Common myeloid progenitor, CD34-positive (primary cell): ENCODE measurements at regions of chr13 and their contacts with region 1.

Region 1: DNA sequence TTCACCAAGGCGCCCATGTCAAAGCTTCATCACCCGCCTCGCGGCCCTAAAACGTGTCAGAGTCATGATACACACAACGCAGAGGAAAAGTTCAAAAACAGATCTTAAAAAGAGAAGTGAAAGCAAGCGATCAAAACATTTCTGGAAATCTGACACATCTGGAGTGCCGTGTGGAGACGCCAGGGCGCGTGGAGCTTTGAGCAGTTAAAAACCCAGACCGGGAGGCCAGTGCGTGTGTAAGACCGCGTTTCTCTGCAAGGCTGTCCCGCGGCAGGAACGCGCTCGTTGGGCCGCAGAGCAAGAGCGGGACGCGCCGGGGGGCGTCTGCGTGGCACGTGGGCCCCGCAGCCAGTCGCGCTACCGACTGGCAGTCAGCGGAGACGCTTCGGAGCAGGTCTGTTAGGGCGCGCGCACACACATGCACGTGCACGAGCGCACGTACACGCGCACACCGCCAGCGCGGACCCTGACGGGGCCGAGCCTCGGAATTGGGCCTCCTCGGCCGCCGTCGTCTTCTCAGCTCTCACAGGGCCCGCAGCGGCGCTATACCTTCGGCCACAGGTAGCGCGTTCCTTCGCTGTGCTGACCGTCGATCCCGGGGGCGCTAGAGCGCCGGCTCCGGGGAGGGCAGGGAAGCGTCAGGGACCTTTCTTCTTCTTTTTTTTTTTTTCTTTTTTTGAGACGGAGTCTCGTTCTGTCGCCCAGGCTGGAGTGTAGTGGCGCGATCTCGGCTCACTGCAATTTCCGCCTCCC is 35.8 kb downstream of the RNF6 start:
- DNase-seq: peak; percentile 96 to 98 (median 98)
- H3K4me3 ChIP-seq: peak overlapping the region; percentile 67 to 89 (median 71)
- H3K27ac ChIP-seq: peak overlapping the region; percentile 17 to 71
- H3K4me1 ChIP-seq: peaks cover 0 to 14% (median 9%) of the 10 kb centered on the region in 4 experiments
- H3K27me3 ChIP-seq: no peaks in the 10 kb centered on the region

Region 2: GRCh38 chr13:26168237-26168820 is 18.0 kb before region 1 on chr13:
- CTCF ChIA-PET with region 1: interaction called, 13 read pairs
- POLR2A ChIA-PET with region 1: no interaction called
- DNase-seq: peak; percentile 31 to 79 (median 72)
- H3K4me3 ChIP-seq: peak overlapping the region in 1 of 7 experiments; percentile 17
- H3K27ac ChIP-seq: peak overlapping the region in 1 of 2 experiments; percentile 20
- H3K4me1 ChIP-seq: peaks cover 0 to 15% (median 6%) of the 10 kb centered on the region in 4 experiments
- H3K27me3 ChIP-seq: no peaks in the 10 kb centered on the region

Region 3: GRCh38 chr13:26482451-26483197 is 296.3 kb after region 1 on chr13:
- CTCF ChIA-PET with region 1: interaction called, 13 read pairs
- POLR2A ChIA-PET with region 1: no interaction called
- DNase-seq: peak; percentile 86 to 93 (median 91)
- H3K4me3 ChIP-seq: peak overlapping the region in 4 of 7 experiments; percentile 50 to 71 (median 58)
- H3K27ac ChIP-seq: no peak overlapping the region
- H3K4me1 ChIP-seq: no peaks in the 10 kb centered on the region
- H3K27me3 ChIP-seq: no peaks in the 10 kb centered on the region

Region 4: DNA sequence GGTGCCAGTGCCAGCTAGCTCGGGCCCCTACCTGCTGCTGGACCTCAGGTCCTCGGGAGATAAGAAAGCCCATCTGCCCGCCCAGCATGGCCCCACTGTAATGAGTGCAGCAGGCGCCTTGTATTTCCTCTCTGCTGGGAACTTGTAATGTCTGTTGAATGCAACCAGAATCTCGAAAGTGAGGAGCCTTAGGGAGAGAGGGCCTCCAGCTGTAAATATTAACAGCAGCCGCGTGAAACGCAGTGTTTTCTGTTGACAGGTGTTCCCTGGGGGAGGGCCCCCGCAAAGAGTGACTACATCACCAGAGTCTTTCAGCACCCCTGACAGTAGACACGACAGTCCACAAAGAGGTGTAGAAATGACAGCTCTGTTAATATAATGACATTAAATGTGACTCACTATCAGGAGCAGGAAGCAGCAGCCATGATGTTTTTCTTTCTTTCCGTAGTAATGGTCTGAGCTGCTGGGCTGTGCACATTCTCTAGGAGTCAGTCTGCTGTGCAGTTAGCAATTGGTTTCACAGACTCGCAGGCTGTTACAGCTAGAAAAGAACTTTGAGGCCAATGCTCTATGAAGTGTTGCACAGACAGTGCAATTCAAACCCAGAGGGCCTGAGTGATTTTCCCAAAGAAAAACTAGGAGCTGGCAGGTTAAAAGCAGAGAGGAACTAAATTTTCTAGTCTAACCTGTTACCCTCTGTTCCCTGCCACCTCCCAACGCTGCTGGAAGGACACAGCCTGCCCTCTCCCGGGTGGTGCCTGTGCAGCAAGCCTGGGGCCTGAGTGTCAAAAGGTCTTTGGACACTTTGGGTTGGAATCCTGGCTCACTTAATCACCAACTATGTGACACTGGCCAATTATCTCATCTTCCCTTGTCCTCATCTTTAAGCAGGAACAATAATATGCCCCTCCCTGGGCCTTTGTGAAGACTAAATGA is 312.6 kb after region 1 on chr13:
- CTCF ChIA-PET with region 1: interaction called, 69 read pairs
- POLR2A ChIA-PET with region 1: no interaction called
- DNase-seq: no peak
- H3K4me3 ChIP-seq: no peak overlapping the region
- H3K27ac ChIP-seq: no peak overlapping the region
- H3K4me1 ChIP-seq: peaks cover 0 to 16% (median 3%) of the 10 kb centered on the region in 4 experiments
- H3K27me3 ChIP-seq: peaks cover 0 to 2% (median 0%) of the 10 kb centered on the region in 5 experiments